GM10248 (cell line): ENCODE measurements at regions of chr11 and their contacts with region 1.

Region 1: GRCh38 chr11:108128772-108129171 is 7.4 kb downstream of the ACAT1 start:
- DNase-seq: no peak
- CTCF ChIP-seq: no peak

Region 2: GRCh38 chr11:108117746-108118371 is 10.9 kb before region 1 on chr11:
- CTCF ChIA-PET with region 1: interaction called, 11 read pairs
- POLR2A ChIA-PET with region 1: no interaction called
- DNase-seq: peak; percentile 32
- CTCF ChIP-seq: peak; percentile 42